Caco-2 (cell line): ENCODE measurements at regions of chr6 and their contacts with region 1.

Region 1: GRCh38 chr6:132483779-132484679 is 28.9 kb downstream of the STX7 start:
- DNase-seq: peak in 1 of 2 experiments; percentile 59
- H3K4me3 ChIP-seq: no peak overlapping the region
- H3K4me3 Mint-ChIP-seq: no peak overlapping the region
- H3K27ac Mint-ChIP-seq: no peak overlapping the region
- H3K4me1 ChIP-seq: no peaks in the 10 kb centered on the region
- H3K4me1 Mint-ChIP-seq: no peaks in the 10 kb centered on the region
- H3K27me3 ChIP-seq: no peaks in the 10 kb centered on the region
- H3K27me3 Mint-ChIP-seq: no peaks in the 10 kb centered on the region
- CTCF ChIP-seq: peak; percentile 59 to 64

Region 2: DNA sequence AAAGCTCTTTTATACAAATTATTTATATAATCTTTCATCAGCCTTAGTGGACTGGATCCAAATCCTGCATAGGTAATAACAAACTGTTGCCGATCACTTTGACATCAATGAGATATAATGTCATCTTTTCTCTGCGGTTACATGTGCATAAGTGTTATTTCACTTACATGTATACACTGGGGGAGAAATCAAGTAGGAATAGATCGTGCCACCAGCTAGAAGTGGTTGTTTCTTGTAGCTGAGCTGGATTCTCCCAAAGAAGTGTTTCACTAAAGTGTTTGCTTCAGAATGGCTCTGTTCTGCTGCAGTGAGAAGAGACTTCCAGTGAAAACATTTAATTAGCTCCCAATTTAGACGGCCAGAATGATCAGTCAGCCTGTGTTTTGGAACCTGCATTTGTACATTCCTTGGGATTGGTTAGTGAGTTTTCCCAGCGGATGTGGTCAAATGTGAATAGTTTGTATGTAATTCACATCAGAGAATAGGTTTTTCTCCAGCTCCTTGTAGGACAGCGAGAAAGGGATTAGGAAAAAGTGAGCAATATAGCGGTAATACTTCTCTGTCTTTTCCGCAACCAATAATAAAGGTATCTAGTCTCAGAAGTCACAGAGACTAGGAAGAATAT is 369.7 kb before region 1 on chr6:
- CTCF ChIA-PET with region 1: no interaction called
- POLR2A ChIA-PET with region 1: no interaction called
- intact Hi-C with region 1: no loop called
- DNase-seq: no peak
- H3K4me3 ChIP-seq: no peak overlapping the region
- H3K4me3 Mint-ChIP-seq: no peak overlapping the region
- H3K27ac Mint-ChIP-seq: no peak overlapping the region
- H3K4me1 ChIP-seq: no peaks in the 10 kb centered on the region
- H3K4me1 Mint-ChIP-seq: no peaks in the 10 kb centered on the region
- H3K27me3 ChIP-seq: no peaks in the 10 kb centered on the region
- H3K27me3 Mint-ChIP-seq: peaks cover 3% of the 10 kb centered on the region
- CTCF ChIP-seq: no peak

Region 3: DNA sequence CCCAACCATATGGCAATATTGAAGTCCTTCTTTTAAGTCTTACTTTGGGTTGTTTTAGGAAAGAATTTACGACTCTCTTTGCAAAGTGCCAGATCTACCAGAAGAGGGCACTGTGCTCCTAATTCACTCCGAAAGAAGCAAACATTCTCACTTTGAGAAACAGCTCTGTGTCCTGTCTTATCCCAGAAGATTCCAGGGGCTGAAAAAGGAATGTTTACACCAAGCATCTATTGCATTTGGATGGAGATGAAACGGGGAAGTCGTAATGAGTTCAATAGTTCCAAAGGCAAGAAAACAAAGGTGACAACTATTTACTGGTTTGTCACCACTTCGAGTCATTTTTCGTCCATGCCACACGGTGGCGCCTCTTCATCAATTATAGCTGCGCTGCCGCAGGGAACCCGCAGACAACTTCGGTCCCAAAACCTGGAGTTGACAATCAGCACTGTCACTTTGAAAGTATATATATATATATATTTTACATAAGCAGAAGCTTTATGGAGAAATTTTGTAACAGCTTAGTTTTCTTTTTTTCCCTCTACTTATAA is 204.4 kb before region 1 on chr6:
- CTCF ChIA-PET with region 1: interaction called, 14 read pairs
- POLR2A ChIA-PET with region 1: no interaction called
- intact Hi-C with region 1: loop called (anchors 1 kb)
- DNase-seq: peak; percentile 57 to 75
- H3K4me3 ChIP-seq: peak overlapping the region; percentile 40
- H3K4me3 Mint-ChIP-seq: peak overlapping the region; percentile 70
- H3K27ac Mint-ChIP-seq: no peak overlapping the region
- H3K4me1 ChIP-seq: no peaks in the 10 kb centered on the region
- H3K4me1 Mint-ChIP-seq: no peaks in the 10 kb centered on the region
- H3K27me3 ChIP-seq: no peaks in the 10 kb centered on the region
- H3K27me3 Mint-ChIP-seq: peaks cover 10% of the 10 kb centered on the region
- CTCF ChIP-seq: peak; percentile 64 to 85

Region 4: DNA sequence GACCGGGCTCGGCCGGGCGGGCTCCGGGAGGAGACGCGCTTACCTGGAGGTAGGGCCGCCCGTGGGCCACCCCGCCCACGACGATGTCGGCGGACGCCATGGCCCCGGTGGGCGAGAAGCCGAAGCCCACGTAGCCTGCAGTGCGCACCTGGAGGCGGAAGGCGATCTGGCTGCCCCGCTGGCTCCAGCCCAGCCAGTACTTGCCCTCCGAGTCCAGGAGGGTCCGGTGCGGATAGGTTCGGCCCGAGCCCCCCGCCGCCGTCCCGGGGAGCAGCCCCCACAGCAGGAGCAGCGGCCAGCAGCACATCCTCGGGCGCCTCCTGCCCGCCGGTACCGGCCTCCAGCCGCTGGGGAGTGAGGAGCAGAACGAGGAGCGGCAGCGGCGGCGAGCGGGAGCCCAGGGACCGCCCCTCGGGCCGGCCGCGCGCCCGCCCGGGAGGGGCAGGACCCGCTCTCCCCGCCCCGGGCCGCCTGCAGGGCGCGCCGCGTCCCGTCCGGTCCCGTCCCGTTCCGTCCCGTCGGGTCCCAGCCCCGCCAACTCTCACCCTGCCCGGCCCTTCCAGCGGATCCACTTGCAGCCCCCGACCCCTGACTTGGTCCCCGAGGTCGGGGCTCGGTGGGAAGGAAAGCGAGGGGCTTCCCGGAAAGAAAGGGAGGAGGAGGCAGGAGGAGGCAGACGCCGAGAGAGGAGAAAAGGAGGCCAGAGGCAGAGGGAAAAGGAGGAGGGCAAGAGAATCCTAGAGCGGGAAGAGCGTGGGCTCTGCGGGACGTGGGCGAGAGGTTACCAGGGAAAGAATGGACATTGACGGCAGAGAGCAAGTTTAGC is 82.7 kb before region 1 on chr6 and contains the start of gene MOXD1:
- CTCF ChIA-PET with region 1: no interaction called
- POLR2A ChIA-PET with region 1: no interaction called
- intact Hi-C with region 1: loop called (anchors 2 kb)
- DNase-seq: peak; percentile 40 to 64
- H3K4me3 ChIP-seq: peak within 1 kb of the TSS; percentile 78
- H3K4me3 Mint-ChIP-seq: peak within 1 kb of the TSS; percentile 71
- H3K27ac Mint-ChIP-seq: no peak within 1 kb of the TSS
- H3K4me1 ChIP-seq: no peaks in the 10 kb centered on the region
- H3K4me1 Mint-ChIP-seq: peaks cover 5% of the 10 kb centered on the region
- H3K27me3 ChIP-seq: peaks cover 2% of the 10 kb centered on the region
- H3K27me3 Mint-ChIP-seq: peaks cover 30% of the 10 kb centered on the region
- CTCF ChIP-seq: no peak
- total RNA-seq, gene MOXD1: 0.09 TPM in 1 of 2 replicates, not detected in the other

Region 5: GRCh38 chr6:132465530-132466485 is 18.2 kb before region 1 on chr6:
- CTCF ChIA-PET with region 1: interaction called, 3 read pairs
- POLR2A ChIA-PET with region 1: no interaction called
- intact Hi-C with region 1: loop called (anchors 2 kb)
- DNase-seq: no peak
- H3K4me3 ChIP-seq: no peak overlapping the region
- H3K4me3 Mint-ChIP-seq: no peak overlapping the region
- H3K27ac Mint-ChIP-seq: no peak overlapping the region
- H3K4me1 ChIP-seq: peaks cover 19% of the 10 kb centered on the region
- H3K4me1 Mint-ChIP-seq: no peaks in the 10 kb centered on the region
- H3K27me3 ChIP-seq: no peaks in the 10 kb centered on the region
- H3K27me3 Mint-ChIP-seq: no peaks in the 10 kb centered on the region
- CTCF ChIP-seq: no peak

Region 6: DNA sequence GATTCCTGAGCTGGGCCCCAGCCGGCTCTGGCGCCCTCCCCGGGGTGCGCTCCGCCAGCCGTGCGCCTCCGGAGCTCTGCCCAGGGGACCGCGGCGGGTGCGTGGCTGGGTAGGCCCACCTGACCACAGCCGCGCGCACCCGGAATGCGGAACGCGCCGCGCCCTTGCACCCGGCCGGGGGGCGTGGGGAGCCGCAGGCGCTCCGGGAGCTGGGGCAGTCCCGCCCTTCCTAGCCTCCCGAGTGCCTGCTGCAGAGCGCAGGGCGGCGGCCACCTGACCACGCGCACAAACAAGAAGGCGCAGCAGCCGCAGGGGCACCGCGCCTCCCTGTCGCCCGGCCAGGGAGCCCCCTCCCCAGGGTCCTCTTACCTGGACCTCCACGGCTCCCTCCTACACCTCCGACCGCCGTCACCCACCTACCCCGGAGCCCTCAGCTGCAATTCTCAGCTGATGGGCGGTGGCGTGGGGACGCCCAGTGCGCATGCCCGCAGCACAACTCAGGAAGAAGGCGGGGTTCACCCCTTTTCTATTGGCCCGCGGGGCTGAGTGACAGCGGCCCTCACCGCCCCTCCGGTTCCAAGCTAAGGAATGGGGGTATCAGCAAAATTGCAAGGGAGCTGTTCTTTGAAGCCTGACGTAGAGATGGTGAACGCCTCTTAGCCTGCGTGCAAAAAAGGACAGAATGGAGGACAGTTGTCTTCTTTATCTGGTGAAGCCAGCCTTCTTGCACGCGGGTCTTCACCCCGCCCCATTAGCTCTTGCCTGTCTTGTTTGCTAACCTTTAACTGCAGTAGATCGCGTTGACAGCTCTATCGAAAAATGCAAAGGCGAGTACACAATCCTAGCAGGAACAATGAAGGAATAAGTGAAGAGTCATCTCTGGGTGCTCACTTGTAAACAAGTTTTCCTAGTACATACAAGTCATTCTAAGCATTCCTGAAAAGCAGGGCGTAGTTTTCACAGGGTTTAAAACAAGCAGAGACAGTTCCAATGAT is 28.9 kb after region 1 on chr6 and contains the start of gene STX7:
- CTCF ChIA-PET with region 1: no interaction called
- POLR2A ChIA-PET with region 1: no interaction called
- intact Hi-C with region 1: no loop called
- DNase-seq: peak; percentile 92
- H3K4me3 ChIP-seq: peak within 1 kb of the TSS; percentile 70
- H3K4me3 Mint-ChIP-seq: peak within 1 kb of the TSS; percentile 92
- H3K27ac Mint-ChIP-seq: peak within 1 kb of the TSS; percentile 90
- H3K4me1 ChIP-seq: peaks cover 12% of the 10 kb centered on the region
- H3K4me1 Mint-ChIP-seq: peaks cover 18% of the 10 kb centered on the region
- H3K27me3 ChIP-seq: no peaks in the 10 kb centered on the region
- H3K27me3 Mint-ChIP-seq: no peaks in the 10 kb centered on the region
- CTCF ChIP-seq: no peak
- total RNA-seq, gene STX7: 41.0 and 42.4 TPM in 2 replicates

Region 7: GRCh38 chr6:132530293-132530974 is 46.4 kb after region 1 on chr6:
- CTCF ChIA-PET with region 1: no interaction called
- POLR2A ChIA-PET with region 1: no interaction called
- intact Hi-C with region 1: no loop called
- DNase-seq: peak; percentile 57 to 72
- H3K4me3 ChIP-seq: peak overlapping the region; percentile 9; the same call in 1 of the 2 replicates
- H3K4me3 Mint-ChIP-seq: no peak overlapping the region
- H3K27ac Mint-ChIP-seq: no peak overlapping the region
- H3K4me1 ChIP-seq: no peaks in the 10 kb centered on the region
- H3K4me1 Mint-ChIP-seq: no peaks in the 10 kb centered on the region
- H3K27me3 ChIP-seq: no peaks in the 10 kb centered on the region
- H3K27me3 Mint-ChIP-seq: no peaks in the 10 kb centered on the region
- CTCF ChIP-seq: peak; percentile 70 to 73

Region 8: GRCh38 chr6:132651062-132651461 is 167.0 kb after region 1 on chr6:
- CTCF ChIA-PET with region 1: no interaction called
- POLR2A ChIA-PET with region 1: no interaction called
- intact Hi-C with region 1: no loop called
- DNase-seq: no peak
- H3K4me3 ChIP-seq: no peak overlapping the region
- H3K4me3 Mint-ChIP-seq: no peak overlapping the region
- H3K27ac Mint-ChIP-seq: no peak overlapping the region
- H3K4me1 ChIP-seq: no peaks in the 10 kb centered on the region
- H3K4me1 Mint-ChIP-seq: no peaks in the 10 kb centered on the region
- H3K27me3 ChIP-seq: no peaks in the 10 kb centered on the region
- H3K27me3 Mint-ChIP-seq: no peaks in the 10 kb centered on the region
- CTCF ChIP-seq: no peak